Activated CD8-positive, alpha-beta T cell treated with anti-CD3 and anti-CD28 coated beads for 36 hours (primary cell): ENCODE measurements at regions of chr10 and their contacts with region 1.

Region 1: GRCh38 chr10:133438711-133439273 is 14.4 kb upstream of the SPRN start:
- DNase-seq: peak; percentile 41
- ATAC-seq: peak; percentile 45
- H3K4me3 Mint-ChIP-seq: no peak overlapping the region
- H3K27ac Mint-ChIP-seq: no peak overlapping the region
- H3K4me1 Mint-ChIP-seq: peaks cover 18% of the 10 kb centered on the region
- H3K27me3 Mint-ChIP-seq: peaks cover 9% of the 10 kb centered on the region
- CTCF ChIP-seq: peak; percentile 57

Region 2: GRCh38 chr10:132492323-132493025 is 946.3 kb before region 1 on chr10:
- CTCF ChIA-PET with region 1: no interaction called
- POLR2A ChIA-PET with region 1: no interaction called
- intact Hi-C with region 1: no loop called
- DNase-seq: no peak
- ATAC-seq: no peak
- H3K4me3 Mint-ChIP-seq: no peak overlapping the region
- H3K27ac Mint-ChIP-seq: no peak overlapping the region
- H3K4me1 Mint-ChIP-seq: no peaks in the 10 kb centered on the region
- H3K27me3 Mint-ChIP-seq: no peaks in the 10 kb centered on the region
- CTCF ChIP-seq: no peak

Region 3: DNA sequence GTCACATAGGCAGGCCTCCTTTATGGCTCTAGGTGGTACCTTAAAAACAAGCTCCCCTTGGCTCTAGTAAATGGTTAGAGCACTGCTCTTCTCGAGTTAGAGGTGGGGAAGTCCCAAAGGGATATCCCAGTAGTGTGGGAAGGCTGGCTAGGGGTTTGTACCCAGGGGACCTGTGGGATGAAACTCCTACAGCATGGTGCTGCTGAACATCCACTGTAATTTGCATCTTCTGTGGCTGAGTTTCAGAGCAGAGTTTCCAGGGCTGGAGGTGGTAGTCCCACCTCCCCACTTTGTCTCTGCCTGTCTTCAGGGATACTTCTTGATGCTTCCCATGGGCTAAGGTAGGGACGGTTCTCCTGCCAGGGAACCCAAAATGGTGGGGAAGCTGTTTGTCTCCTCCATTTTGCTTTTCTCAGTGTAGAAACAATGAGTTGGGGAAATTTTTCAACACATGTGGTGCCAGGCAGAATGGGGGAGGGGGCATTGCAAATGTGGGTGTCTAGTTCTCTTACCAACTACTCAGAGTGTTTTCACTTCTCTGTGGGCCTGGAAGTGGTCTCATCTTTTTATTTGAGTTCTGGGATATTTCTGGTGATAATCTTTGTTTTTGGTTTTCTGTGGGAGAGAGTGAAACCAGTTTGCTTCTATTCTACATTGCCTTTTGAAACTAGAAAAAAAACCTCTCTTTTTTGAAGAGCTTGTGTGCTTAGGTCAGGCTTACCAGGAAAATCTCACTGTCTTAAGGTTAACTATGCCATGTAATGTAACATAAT is 51.2 kb after region 1 on chr10:
- CTCF ChIA-PET with region 1: interaction called, 29 read pairs
- POLR2A ChIA-PET with region 1: interaction called, 3 read pairs
- intact Hi-C with region 1: loop called (anchors 5 kb)
- DNase-seq: peak; percentile 51
- ATAC-seq: peak; percentile 51
- H3K4me3 Mint-ChIP-seq: no peak overlapping the region
- H3K27ac Mint-ChIP-seq: peak overlapping the region; percentile 50
- H3K4me1 Mint-ChIP-seq: peaks cover 12% of the 10 kb centered on the region
- H3K27me3 Mint-ChIP-seq: no peaks in the 10 kb centered on the region
- CTCF ChIP-seq: no peak

Region 4: DNA sequence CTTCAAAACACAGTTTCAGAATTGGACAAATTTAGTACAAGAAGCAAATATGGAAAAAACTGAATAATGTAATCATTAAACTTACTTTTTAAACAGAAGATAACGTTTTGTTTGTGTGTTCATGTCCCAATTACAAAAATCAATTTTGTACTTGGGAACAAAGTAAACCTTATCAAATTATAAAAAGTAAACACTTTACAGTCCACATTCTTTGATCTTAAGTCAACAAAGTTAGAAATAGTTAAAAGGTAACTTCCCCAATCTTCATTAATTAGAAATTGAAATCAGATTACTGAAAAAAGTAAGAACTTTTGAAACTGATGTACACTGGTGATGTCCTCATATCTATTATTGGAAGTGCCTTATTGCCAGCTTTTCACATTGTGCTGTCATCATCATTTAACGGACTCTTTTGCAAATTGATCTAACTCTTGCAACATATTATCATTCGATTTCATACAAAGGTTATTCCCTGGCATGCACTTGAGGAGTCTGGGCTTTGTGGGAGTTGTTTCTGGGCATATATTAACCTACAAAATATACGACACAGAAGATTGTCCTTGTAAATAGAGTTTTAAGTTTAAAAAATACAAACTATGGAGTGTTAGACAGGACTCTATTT is 73.2 kb after region 1 on chr10:
- CTCF ChIA-PET with region 1: interaction called, 15 read pairs
- POLR2A ChIA-PET with region 1: no interaction called
- intact Hi-C with region 1: no loop called
- DNase-seq: no peak
- ATAC-seq: no peak
- H3K4me3 Mint-ChIP-seq: no peak overlapping the region
- H3K27ac Mint-ChIP-seq: no peak overlapping the region
- H3K4me1 Mint-ChIP-seq: no peaks in the 10 kb centered on the region
- H3K27me3 Mint-ChIP-seq: peaks cover 15% of the 10 kb centered on the region
- CTCF ChIP-seq: no peak

Region 5: DNA sequence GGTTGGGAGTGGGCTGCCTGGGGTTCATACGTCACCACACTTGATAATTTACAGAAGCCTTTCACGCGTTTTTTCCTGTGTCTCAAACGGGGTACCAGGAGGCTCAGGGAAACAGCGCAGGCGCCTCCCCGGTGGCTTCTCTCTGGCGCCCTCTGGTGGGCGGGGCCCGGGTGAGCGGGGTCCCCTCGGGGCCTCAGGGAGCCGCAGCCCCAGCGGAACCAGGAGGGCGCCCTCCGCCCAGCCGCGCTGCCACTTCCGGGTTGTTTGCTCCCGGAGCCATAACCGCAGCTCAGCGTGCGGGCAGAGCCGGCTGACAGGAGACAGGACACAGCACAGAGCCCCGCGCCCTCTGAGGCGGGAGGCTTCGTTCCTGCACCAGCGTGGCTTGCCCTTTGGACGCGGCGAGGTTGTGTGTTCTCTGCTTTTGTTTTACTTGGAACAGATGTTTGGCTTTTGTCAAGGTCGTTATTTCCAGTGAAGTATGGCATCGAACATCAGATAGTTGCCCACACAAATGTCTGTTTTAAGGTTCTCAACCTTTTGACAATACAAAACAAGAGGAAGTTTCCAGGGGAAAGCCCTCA is 81.5 kb after region 1 on chr10:
- CTCF ChIA-PET with region 1: interaction called, 12 read pairs
- POLR2A ChIA-PET with region 1: no interaction called
- intact Hi-C with region 1: no loop called
- DNase-seq: peak; percentile 94
- ATAC-seq: peak; percentile 100
- H3K4me3 Mint-ChIP-seq: peak overlapping the region; percentile 63
- H3K27ac Mint-ChIP-seq: peak overlapping the region; percentile 39
- H3K4me1 Mint-ChIP-seq: peaks cover 9% of the 10 kb centered on the region
- H3K27me3 Mint-ChIP-seq: peaks cover 6% of the 10 kb centered on the region
- CTCF ChIP-seq: peak; percentile 95

Region 6: GRCh38 chr10:133565441-133566294 is 126.9 kb after region 1 on chr10 and contains the start of gene SYCE1:
- CTCF ChIA-PET with region 1: no interaction called
- POLR2A ChIA-PET with region 1: no interaction called
- intact Hi-C with region 1: loop called (anchors 5 kb)
- DNase-seq: no peak
- ATAC-seq: no peak
- H3K4me3 Mint-ChIP-seq: no peak within 1 kb of the TSS
- H3K27ac Mint-ChIP-seq: no peak within 1 kb of the TSS
- H3K4me1 Mint-ChIP-seq: no peaks in the 10 kb centered on the region
- H3K27me3 Mint-ChIP-seq: peaks cover 7% of the 10 kb centered on the region
- CTCF ChIP-seq: no peak
- total RNA-seq, gene SYCE1: not detected